AG04449 (cell line): ENCODE measurements at regions of chr15 and their contacts with region 1.

Region 1: DNA sequence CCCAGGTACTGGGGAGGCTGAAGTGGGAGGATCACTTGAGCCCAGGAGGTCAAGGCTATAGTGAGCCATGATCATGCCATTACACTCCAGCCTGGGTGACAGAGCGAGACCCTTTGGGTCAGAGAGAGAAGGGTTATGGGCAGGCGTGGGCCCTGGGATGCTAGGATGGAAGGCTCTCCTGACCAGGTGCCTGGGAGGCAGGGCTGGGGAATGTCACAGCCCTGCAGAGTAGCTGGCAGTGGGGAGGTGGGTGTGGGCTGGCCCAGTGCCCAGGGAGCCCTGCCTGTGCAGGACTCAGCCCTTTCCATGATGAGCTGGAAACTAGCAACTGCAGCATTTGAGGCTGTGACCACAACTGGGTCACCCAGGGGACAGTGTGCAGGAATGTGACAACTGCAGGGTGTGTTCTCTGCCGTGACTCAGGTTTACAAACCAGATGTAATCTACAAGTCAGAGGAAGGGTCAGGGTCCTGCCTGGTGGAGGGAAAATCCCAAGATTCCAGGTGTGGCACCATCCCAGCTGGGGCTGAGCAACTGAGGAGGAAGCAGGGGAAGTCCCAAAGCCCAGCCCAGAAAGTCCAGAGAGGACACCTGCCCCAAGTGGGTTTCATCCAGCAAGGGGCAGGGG is 45.4 kb downstream of the SLC28A1 start:
- DNase-seq: no peak
- H3K4me3 ChIP-seq: no peak overlapping the region
- CTCF ChIP-seq: no peak

Region 2: DNA sequence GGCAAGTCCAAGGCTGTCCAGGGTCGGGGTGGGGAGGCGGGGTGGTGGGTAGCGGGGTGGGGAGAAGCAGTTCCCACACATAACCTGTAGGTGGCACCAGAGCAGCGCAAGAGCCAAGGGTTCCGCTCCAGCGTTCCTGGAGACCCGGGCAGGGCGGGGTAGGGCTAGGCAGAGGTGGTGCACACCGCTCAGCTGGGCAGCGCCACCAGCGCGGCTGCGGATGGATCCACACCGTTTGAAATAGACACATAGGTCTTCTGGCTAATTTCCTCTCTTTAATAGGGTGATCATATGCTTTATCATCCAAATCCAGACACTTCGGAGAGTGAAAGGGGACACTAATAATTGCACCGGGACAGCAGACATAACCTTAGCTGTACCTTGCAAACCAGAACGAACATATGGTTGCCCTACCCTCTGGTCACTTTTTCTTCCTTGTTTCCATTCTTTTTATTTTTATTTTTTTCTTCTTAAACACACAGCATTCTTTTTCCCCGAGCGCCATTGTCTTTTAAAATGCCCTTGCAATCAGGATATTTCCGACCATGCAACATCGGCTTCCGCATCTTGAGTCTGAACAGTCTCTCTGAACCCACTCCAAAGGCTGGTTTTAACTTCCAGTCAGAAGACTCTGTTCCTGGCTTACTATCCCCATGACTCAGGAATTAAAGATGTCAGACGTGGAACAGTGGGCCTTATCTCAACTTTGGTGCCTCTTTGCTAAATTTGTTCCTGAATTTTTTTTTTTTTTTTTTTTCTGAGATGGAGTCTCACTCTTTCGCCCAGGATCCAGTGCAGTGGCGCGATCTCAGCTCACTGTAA is 341.6 kb before region 1 on chr15:
- CTCF ChIA-PET with region 1: interaction called, 20 read pairs
- POLR2A ChIA-PET with region 1: no interaction called
- DNase-seq: no peak
- H3K4me3 ChIP-seq: peak overlapping the region; percentile 44
- CTCF ChIP-seq: peak; percentile 82

Region 3: DNA sequence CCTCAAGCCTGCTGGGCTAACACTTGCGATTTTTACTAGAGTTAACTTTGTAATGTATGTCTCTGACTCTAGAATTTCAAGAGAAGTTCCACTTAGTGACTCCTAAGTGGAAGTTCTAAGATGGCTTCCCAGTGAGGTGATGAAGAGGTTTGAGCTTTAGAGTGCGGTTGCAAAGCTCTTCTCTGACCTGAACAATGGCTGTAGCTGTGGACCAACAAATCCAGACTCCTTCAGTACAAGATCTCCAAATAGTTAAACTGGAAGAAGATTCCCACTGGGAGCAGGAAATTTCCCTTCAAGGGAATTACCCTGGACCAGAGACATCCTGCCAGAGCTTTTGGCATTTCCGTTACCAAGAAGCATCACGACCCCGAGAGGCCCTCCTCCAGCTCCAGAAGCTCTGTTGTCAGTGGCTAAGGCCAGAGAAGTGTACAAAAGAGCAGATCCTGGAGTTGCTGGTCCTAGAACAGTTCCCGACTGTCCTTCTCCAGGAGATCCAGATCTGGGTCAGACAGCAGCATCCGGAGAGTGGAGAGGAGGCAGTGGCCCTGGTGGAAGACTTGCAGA is 298.1 kb before region 1 on chr15:
- CTCF ChIA-PET with region 1: interaction called, 12 read pairs
- POLR2A ChIA-PET with region 1: interaction called, 3 read pairs
- DNase-seq: no peak
- H3K4me3 ChIP-seq: peak overlapping the region; percentile 83
- CTCF ChIP-seq: no peak

Region 4: GRCh38 chr15:84844964-84845363 is 84.9 kb before region 1 on chr15:
- CTCF ChIA-PET with region 1: interaction called, 24 read pairs
- POLR2A ChIA-PET with region 1: no interaction called
- DNase-seq: no peak
- H3K4me3 ChIP-seq: no peak overlapping the region
- CTCF ChIP-seq: no peak

Region 5: GRCh38 chr15:84894442-84895361 is 35.2 kb before region 1 on chr15:
- CTCF ChIA-PET with region 1: no interaction called
- POLR2A ChIA-PET with region 1: no interaction called
- DNase-seq: no peak
- H3K4me3 ChIP-seq: no peak overlapping the region
- CTCF ChIP-seq: no peak

Region 6: GRCh38 chr15:84947947-84948830 is 18.3 kb after region 1 on chr15:
- CTCF ChIA-PET with region 1: interaction called, 67 read pairs
- POLR2A ChIA-PET with region 1: no interaction called
- DNase-seq: peak; percentile 71
- H3K4me3 ChIP-seq: no peak overlapping the region
- CTCF ChIP-seq: no peak

Region 7: GRCh38 chr15:84982301-84982920 is 52.6 kb after region 1 on chr15:
- CTCF ChIA-PET with region 1: no interaction called
- POLR2A ChIA-PET with region 1: no interaction called
- DNase-seq: no peak
- H3K4me3 ChIP-seq: peak overlapping the region; percentile 79
- CTCF ChIP-seq: no peak

Region 8: GRCh38 chr15:85080329-85080728 is 150.5 kb after region 1 on chr15:
- CTCF ChIA-PET with region 1: no interaction called
- POLR2A ChIA-PET with region 1: no interaction called
- DNase-seq: no peak
- H3K4me3 ChIP-seq: no peak overlapping the region
- CTCF ChIP-seq: no peak